H1 (cell line): ENCODE measurements at regions of chr12 and their contacts with region 1.

Region 1: GRCh38 chr12:119136811-119137410 is 41.8 kb upstream of the HSPB8 start:
- DNase-seq: no peak
- H3K4me3 ChIP-seq: no peak overlapping the region
- H3K27ac ChIP-seq: no peak overlapping the region
- H3K4me1 ChIP-seq: no peaks in the 10 kb centered on the region
- H3K27me3 ChIP-seq: no peaks in the 10 kb centered on the region
- CTCF ChIP-seq: no peak
- EP300 ChIP-seq: no peak
- POLR2A ChIP-seq: no peak
- RAD21 ChIP-seq: no peak

Region 2: GRCh38 chr12:118743896-118744700 is 392.8 kb before region 1 on chr12:
- CTCF ChIA-PET with region 1: no interaction called
- POLR2A ChIA-PET with region 1: no interaction called
- DNase-seq: no peak
- H3K4me3 ChIP-seq: no peak overlapping the region
- H3K27ac ChIP-seq: no peak overlapping the region
- H3K4me1 ChIP-seq: no peaks in the 10 kb centered on the region
- H3K27me3 ChIP-seq: no peaks in the 10 kb centered on the region
- CTCF ChIP-seq: no peak
- EP300 ChIP-seq: no peak
- POLR2A ChIP-seq: no peak
- RAD21 ChIP-seq: no peak

Region 3: DNA sequence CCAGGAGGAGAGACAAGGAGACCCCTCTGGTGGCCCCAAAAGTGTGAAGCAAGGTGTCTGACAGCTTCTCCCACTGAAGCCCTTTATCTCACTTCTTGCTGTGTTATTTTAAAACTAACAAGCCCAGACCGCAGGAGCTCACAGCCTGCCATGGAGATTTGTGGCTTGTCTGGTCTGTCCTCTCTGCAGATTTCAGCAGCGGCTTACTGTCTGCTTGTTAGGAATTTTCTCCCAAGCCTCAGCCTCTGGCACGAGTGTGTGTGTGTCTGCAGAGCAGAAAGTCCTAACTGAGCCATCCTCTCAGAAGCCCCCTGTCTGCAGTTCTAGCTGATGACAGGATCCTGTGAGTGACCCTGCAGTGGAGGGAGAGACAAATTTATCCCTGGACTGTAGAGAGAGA is 46.0 kb before region 1 on chr12:
- CTCF ChIA-PET with region 1: no interaction called
- POLR2A ChIA-PET with region 1: no interaction called
- DNase-seq: no peak
- H3K4me3 ChIP-seq: no peak overlapping the region
- H3K27ac ChIP-seq: 0 out of 2 replicates have a peak overlapping the region, but pooled peaks have one; percentile 10
- H3K4me1 ChIP-seq: peaks cover 7 to 21% (median 17%) of the 10 kb centered on the region in 4 experiments
- H3K27me3 ChIP-seq: no peaks in the 10 kb centered on the region
- CTCF ChIP-seq: no peak
- EP300 ChIP-seq: no peak
- POLR2A ChIP-seq: no peak
- RAD21 ChIP-seq: no peak

Region 4: DNA sequence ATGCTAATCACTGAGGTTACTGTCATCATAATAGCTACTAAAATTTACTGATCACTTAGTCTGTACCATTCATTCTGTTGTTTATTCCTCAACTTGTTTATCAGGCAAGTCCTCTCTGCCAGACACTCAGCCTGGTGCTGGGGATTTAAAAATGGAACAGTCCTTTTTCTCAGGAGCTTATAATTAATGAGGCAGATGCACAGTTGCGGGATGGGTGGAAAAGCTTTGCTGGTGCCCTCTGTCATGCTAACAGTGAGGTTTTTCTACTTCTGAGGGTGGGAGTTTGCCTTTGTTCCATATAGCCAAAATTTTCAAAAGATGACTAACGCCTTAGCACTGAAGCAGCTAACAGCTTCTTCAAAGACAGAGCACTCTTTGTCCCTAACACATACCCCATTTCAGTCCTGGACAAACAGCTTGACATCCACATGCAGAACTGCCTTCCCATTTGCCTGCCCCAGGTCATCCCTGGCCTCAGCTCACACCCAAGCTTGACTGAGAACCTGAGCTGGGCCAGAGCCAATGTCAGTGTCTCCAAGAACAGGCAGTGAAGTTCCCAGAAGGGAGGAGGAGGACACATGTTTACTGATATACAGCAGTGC is 11.0 kb after region 1 on chr12:
- CTCF ChIA-PET with region 1: interaction called, 16 read pairs
- POLR2A ChIA-PET with region 1: interaction called, 22 read pairs
- DNase-seq: no peak
- H3K4me3 ChIP-seq: no peak overlapping the region
- H3K27ac ChIP-seq: no peak overlapping the region
- H3K4me1 ChIP-seq: peaks cover 0 to 17% (median 10%) of the 10 kb centered on the region in 4 experiments; a peak in 5 of 7 replicates
- H3K27me3 ChIP-seq: no peaks in the 10 kb centered on the region
- CTCF ChIP-seq: no peak
- EP300 ChIP-seq: no peak
- POLR2A ChIP-seq: no peak
- RAD21 ChIP-seq: no peak

Region 5: DNA sequence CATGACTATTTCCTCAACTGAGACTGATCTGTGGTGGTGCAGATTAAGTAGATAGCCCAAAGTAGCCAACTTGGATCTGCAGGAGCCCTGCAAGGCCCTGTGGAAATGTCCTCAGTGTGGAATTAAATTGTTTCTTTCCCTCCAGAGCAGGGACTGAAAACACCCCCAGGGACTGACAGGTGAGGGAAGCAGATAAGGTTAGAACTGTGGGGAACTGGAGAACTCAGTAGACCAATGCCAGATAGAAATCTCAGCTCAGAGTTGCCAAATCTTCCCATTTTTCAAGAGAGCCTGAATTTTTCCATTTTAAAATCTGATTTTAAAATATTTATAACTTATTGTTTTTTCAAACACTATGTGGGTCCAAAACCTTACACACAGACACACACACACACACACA is 27.3 kb after region 1 on chr12:
- CTCF ChIA-PET with region 1: no interaction called
- POLR2A ChIA-PET with region 1: no interaction called
- DNase-seq: no peak
- H3K4me3 ChIP-seq: no peak overlapping the region
- H3K27ac ChIP-seq: no peak overlapping the region
- H3K4me1 ChIP-seq: peaks cover 0 to 2% (median 0%) of the 10 kb centered on the region in 4 experiments; a peak in 1 of 7 replicates
- H3K27me3 ChIP-seq: no peaks in the 10 kb centered on the region
- CTCF ChIP-seq: no peak
- EP300 ChIP-seq: no peak
- POLR2A ChIP-seq: no peak
- RAD21 ChIP-seq: no peak